Activated CD8-positive, alpha-beta T cell treated with anti-CD3 and anti-CD28 coated beads for 36 hours (primary cell): ENCODE measurements at regions of chr11 and their contacts with region 1.

Region 1: GRCh38 chr11:59767225-59767611 is 12.0 kb downstream of the STX3 start:
- DNase-seq: peak; percentile 18
- ATAC-seq: peak; percentile 69
- H3K4me3 Mint-ChIP-seq: no peak overlapping the region
- H3K27ac Mint-ChIP-seq: no peak overlapping the region
- H3K4me1 Mint-ChIP-seq: peaks cover 13% of the 10 kb centered on the region
- H3K27me3 Mint-ChIP-seq: no peaks in the 10 kb centered on the region
- CTCF ChIP-seq: no peak

Region 2: GRCh38 chr11:59753650-59754493 is 13.3 kb before region 1 on chr11:
- CTCF ChIA-PET with region 1: interaction called, 17 read pairs
- POLR2A ChIA-PET with region 1: interaction called, 4 read pairs
- intact Hi-C with region 1: no loop called
- DNase-seq: peak; percentile 92
- ATAC-seq: peak; percentile 71
- H3K4me3 Mint-ChIP-seq: peak overlapping the region; percentile 96
- H3K27ac Mint-ChIP-seq: peak overlapping the region; percentile 55
- H3K4me1 Mint-ChIP-seq: peaks cover 14% of the 10 kb centered on the region
- H3K27me3 Mint-ChIP-seq: peaks cover 8% of the 10 kb centered on the region
- CTCF ChIP-seq: peak; percentile 92